ENCODE measurements at regions of chr16 and their contacts with region 1.

Region 1: DNA sequence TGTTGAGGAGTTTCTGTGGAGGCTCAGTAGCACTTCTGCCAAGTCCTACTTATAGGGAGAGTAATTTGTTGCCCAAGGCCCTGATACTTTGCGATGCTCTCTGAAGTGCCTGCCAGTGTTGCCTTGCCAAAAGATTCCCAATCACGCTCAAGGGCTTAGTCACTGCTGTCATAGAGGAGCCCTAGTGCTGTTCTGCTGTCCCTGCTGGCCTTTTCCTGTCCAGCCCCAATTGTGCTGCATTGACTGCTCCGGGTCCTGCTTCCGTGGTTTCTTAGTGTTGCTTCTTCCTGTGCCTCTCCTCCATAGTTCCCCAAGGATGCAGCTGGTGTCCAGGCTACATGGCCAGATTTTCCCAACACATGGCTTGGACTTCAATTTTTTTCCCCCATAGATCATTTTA is 13.9 kb downstream of the NUP93 start:
- DNase-seq: no peak
- H3K4me3 ChIP-seq: no peak overlapping the region
- H3K27ac ChIP-seq: no peak overlapping the region
- H3K4me1 ChIP-seq: no peaks in the 10 kb centered on the region
- CTCF ChIP-seq: no peak

Region 2: GRCh38 chr16:56716761-56717160 is 27.1 kb before region 1 on chr16:
- CTCF ChIA-PET with region 1: no interaction called
- POLR2A ChIA-PET with region 1: no interaction called
- intact Hi-C with region 1: loop called (anchors 1 kb)
- DNase-seq: no peak
- H3K4me3 ChIP-seq: no peak overlapping the region
- H3K27ac ChIP-seq: no peak overlapping the region
- H3K4me1 ChIP-seq: peaks cover 4% of the 10 kb centered on the region
- CTCF ChIP-seq: no peak

Measured in OCI-LY7 (cell line).